Calu3 (cell line): ENCODE measurements at regions of chr17 and their contacts with region 1.

Region 1: DNA sequence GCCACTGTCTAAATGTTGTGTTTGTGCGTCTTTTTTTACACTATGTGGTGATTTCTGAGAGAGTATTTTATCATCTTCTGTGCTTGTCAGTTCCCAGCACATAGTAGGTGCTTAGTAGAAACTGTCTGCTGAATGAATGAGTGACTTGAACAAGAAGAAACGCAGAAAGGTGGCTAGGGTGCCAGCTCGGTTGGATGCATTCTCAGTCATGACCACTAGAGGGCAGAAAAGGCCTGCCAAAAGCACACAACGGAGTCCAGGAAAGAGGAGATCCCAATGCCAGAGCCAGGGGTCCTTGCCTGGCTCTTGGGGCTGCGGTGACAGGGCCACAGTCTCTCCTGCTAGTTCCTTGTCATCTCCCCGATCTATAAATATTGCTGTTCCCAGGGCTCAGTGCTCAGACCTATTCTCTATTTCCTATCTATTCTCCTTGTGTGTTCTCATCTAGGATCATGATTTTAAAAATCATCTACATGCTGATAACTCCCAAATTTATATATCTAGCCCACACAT is 57.3 kb upstream of the CCL1 start:
- DNase-seq: peak; percentile 73
- H3K4me3 Mint-ChIP-seq: no peak overlapping the region
- H3K27ac Mint-ChIP-seq: no peak overlapping the region
- H3K4me1 Mint-ChIP-seq: peaks cover 11% of the 10 kb centered on the region
- H3K27me3 Mint-ChIP-seq: peaks cover 94% of the 10 kb centered on the region
- CTCF ChIP-seq: peak; percentile 91

Region 2: DNA sequence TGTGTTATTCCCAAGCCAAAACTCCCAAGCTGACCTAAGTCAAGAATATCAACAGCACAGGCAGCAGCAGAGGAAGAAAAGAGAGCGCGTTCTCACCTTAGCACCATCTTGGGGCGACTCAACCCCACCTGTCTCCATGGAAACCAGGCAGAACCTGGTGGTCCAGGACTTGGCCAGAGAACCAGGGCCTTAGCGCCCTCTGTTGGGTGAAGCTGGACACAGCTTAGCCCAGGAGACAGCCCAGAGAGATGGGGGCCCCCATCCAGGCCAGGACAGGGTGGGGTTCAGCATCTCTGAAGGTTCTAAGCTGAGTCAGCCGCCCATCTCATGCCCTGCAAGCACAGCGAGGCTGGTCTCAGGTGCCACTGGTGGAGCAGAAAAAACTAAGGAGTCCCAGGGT is 99.0 kb after region 1 on chr17:
- CTCF ChIA-PET with region 1: interaction called, 3 read pairs
- intact Hi-C with region 1: loop called (anchors 5 kb)
- DNase-seq: peak; percentile 20
- H3K4me3 Mint-ChIP-seq: no peak overlapping the region
- H3K27ac Mint-ChIP-seq: no peak overlapping the region
- H3K4me1 Mint-ChIP-seq: no peaks in the 10 kb centered on the region
- H3K27me3 Mint-ChIP-seq: peaks cover 43% of the 10 kb centered on the region
- CTCF ChIP-seq: peak; percentile 37

Region 3: DNA sequence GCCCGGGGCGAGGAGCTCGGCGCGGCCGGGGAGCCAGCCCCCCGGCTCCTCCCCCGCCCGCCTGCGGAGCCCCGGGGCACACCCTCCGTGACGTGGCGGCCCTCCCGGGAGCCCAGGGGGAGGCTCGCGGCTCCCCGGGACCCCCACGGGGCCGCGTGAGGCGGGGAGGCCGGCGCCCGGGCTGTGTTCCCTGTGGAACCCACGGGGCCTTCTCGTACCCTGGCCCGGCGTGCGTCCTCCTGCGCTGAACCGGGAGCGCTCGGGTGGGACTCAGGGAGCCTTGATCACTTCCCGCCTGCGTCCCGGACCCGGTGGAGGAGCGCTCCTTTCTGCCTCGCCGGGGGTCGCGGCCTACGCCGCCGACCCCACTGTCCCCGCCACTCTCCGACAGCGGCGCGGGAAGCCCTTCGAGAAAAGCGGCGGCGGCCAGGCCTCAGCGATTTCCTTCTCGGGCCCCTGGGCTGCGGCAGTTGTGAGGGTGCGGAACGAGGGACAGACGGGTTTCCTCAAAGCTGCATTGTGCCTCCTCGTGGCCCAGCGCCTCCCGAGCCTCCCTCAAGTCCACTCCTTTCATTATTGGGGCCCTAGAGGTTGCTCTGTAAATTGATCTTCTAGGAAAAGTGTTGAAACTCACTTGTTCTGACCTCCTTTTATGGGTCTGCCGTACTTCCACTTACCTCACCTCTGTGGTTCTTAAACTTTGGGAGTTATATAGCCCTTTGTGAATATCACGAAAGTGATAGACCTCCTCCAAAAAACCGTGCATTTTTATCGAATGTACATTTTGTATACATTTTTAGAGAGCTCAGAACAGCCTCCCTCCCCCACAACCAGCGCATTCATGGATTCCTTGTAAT is 560.6 kb after region 1 on chr17:
- CTCF ChIA-PET with region 1: interaction called, 3 read pairs
- intact Hi-C with region 1: loop called (anchors 2 kb)
- DNase-seq: peak; percentile 78
- H3K4me3 Mint-ChIP-seq: peak overlapping the region; percentile 87
- H3K27ac Mint-ChIP-seq: peak overlapping the region; percentile 95
- H3K4me1 Mint-ChIP-seq: peaks cover 12% of the 10 kb centered on the region
- H3K27me3 Mint-ChIP-seq: no peaks in the 10 kb centered on the region
- CTCF ChIP-seq: peak; percentile 42